ENCODE measurements at regions of chr3 and their contacts with region 1.

Region 1: GRCh38 chr3:173045770-173046382 is 95.2 kb downstream of the SPATA16 start:
- DNase-seq: no peak
- H3K4me3 ChIP-seq: no peak overlapping the region
- H3K27ac ChIP-seq: no peak overlapping the region
- H3K4me1 ChIP-seq: no peaks in the 10 kb centered on the region
- H3K27me3 ChIP-seq: no peaks in the 10 kb centered on the region
- CTCF ChIP-seq: no peak
- EP300 ChIP-seq: no peak
- POLR2A ChIP-seq: no peak

Region 2: GRCh38 chr3:173098959-173099358 is 53.1 kb after region 1 on chr3:
- intact Hi-C with region 1: loop called in 1 of 4 experiments (anchors 2 kb)
- DNase-seq: no peak
- H3K4me3 ChIP-seq: no peak overlapping the region
- H3K27ac ChIP-seq: no peak overlapping the region
- H3K4me1 ChIP-seq: no peaks in the 10 kb centered on the region
- H3K27me3 ChIP-seq: no peaks in the 10 kb centered on the region
- CTCF ChIP-seq: no peak
- EP300 ChIP-seq: no peak
- POLR2A ChIP-seq: no peak

Measured in ovary (tissue), 10 donors.